ENCODE measurements at regions of chr20 and their contacts with region 1.

Region 1: GRCh38 chr20:20568604-20569205 is 143.7 kb downstream of the RALGAPA2 start:
- DNase-seq: no peak
- H3K4me3 Mint-ChIP-seq: no peak overlapping the region
- H3K27ac Mint-ChIP-seq: no peak overlapping the region
- H3K4me1 Mint-ChIP-seq: peaks cover 5% of the 10 kb centered on the region
- H3K27me3 Mint-ChIP-seq: no peaks in the 10 kb centered on the region

Region 2: DNA sequence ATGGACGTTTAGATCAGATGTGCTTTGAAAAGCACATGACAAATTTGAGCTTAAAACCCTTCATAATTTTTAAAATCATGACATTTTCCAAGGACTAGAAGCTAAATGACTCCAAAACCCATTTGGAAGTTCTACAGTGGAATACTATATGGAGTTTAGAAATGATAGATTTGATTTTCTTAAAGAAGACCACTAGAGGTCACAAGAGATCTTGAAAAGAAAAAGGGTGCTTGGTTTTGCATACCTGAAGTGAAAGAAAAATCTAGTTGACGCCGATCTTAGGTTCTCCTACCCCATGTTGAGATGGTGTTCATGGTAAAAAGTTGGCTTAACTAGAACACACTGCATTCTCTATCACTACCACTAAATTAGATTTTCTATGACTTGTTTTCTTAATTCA is 484.9 kb before region 1 on chr20:
- intact Hi-C with region 1: loop called (anchors 1 kb)
- DNase-seq: no peak
- H3K4me3 Mint-ChIP-seq: peak overlapping the region; percentile 54
- H3K27ac Mint-ChIP-seq: no peak overlapping the region
- H3K4me1 Mint-ChIP-seq: no peaks in the 10 kb centered on the region
- H3K27me3 Mint-ChIP-seq: peaks cover 14% of the 10 kb centered on the region

Region 3: DNA sequence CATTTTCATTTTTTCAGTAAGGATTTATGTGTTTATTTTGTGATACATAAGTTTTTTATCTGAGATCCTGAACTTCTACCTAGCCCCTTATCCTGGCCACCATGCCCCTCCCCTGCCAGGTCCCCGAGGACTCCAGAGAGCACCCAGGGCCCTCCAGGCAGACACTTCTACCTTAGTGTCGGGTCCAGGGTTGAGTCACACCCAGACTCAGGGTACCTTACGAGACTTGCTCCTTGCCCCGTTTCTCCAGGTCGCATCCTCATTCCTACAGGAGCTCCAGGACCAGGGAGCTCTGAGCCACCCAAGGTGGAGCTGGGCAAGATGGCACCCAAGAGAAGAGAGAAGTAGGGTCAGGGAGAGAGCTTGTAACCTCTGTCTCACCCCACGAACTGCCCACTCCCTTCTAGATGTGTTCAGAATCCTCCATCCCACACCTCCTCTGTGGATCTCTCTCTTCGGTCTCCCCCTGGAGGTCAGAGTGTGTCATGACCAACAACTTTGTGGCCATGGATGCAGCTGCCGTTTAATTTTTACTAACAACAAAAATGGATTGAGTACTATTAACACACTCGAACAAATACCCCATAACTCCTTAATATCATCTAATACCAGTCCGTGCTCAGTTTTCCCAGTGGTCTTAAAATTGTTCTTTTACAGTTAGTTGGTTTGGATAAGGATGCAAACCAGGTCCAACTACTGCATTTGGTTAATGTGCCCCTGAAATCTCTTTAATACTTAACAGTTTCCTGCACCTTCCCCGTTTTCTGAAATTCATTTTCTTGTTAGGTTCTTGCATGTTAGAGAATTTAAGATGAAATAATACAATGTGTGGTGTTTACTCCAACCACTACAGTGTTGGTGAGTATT is 331.4 kb before region 1 on chr20:
- intact Hi-C with region 1: loop called (anchors 5 kb)
- DNase-seq: no peak
- H3K4me3 Mint-ChIP-seq: no peak overlapping the region
- H3K27ac Mint-ChIP-seq: no peak overlapping the region
- H3K4me1 Mint-ChIP-seq: peaks cover 5% of the 10 kb centered on the region
- H3K27me3 Mint-ChIP-seq: peaks cover 13% of the 10 kb centered on the region

Region 4: GRCh38 chr20:20369250-20370093 is 199.2 kb before region 1 on chr20:
- intact Hi-C with region 1: loop called (anchors 1 kb)
- DNase-seq: no peak
- H3K4me3 Mint-ChIP-seq: peak overlapping the region; percentile 88
- H3K27ac Mint-ChIP-seq: peak overlapping the region; percentile 89
- H3K4me1 Mint-ChIP-seq: peaks cover 28% of the 10 kb centered on the region
- H3K27me3 Mint-ChIP-seq: peaks cover 60% of the 10 kb centered on the region

Region 5: GRCh38 chr20:20452254-20452676 is 116.4 kb before region 1 on chr20:
- intact Hi-C with region 1: loop called (anchors 5 kb)
- DNase-seq: peak; percentile 43
- H3K4me3 Mint-ChIP-seq: peak overlapping the region; percentile 89
- H3K27ac Mint-ChIP-seq: peak overlapping the region; percentile 91
- H3K4me1 Mint-ChIP-seq: peaks cover 54% of the 10 kb centered on the region
- H3K27me3 Mint-ChIP-seq: no peaks in the 10 kb centered on the region

Region 6: DNA sequence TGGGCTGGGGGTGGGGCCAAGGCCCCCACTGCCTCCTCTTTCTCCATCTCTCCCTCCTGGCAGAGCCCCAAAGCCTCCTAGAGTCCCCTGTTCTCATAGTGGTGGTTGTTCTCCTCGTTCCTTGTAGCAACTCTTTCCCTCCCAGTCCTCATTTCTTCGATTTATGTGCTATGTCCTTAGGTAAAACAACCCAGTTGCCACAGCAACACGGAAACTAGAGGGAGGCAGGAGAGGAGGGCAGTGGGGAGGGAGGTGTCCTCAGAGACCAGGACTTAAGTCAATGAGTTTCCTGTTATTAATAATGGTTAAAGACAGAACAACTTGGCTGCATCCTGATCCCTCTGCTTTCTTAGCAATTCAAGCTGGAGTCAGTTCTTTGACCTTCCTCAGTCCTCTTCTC is 39.8 kb before region 1 on chr20:
- intact Hi-C with region 1: no loop called
- DNase-seq: no peak
- H3K4me3 Mint-ChIP-seq: no peak overlapping the region
- H3K27ac Mint-ChIP-seq: no peak overlapping the region
- H3K4me1 Mint-ChIP-seq: no peaks in the 10 kb centered on the region
- H3K27me3 Mint-ChIP-seq: no peaks in the 10 kb centered on the region

Region 7: GRCh38 chr20:20658871-20659431 is 90.2 kb after region 1 on chr20:
- intact Hi-C with region 1: no loop called
- DNase-seq: no peak
- H3K4me3 Mint-ChIP-seq: no peak overlapping the region
- H3K27ac Mint-ChIP-seq: no peak overlapping the region
- H3K4me1 Mint-ChIP-seq: no peaks in the 10 kb centered on the region
- H3K27me3 Mint-ChIP-seq: no peaks in the 10 kb centered on the region

Region 8: DNA sequence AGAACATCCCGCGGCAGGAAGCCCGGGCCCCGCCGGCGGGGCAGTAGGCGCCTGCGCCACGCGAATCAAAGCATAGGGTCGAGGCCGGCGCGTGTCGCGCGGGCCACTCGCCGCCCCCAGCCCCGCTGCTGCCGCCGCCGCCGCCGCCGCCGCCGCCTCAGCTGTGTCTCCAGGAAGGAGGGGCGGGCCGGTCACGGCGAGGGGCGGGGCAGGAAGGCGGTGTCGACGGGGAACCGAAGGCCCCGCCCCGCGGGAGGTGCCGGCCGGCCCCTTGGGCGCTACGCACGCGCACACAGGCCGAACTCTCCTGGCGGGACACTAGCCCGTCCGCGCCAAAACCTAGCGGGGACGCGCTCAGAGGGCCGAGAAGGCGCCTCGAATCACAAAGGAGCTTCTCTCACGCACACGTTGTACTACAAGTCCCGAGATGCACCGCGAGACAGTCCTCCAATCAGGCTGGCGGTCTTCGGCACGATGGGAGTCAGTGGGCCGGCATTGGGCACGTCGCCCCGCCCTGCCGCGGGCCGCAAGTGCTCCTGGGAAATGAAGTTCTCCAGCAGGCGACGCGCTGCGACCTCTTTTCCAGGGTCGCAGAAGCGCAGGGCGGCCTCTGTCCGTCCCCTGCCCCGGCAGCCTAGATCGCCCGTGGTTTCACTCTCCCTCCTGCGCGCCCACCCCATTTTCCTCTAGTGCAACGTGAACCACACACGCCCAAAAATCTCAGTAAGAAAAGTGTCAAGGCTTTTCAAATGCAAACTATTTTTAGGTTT is 144.0 kb after region 1 on chr20 and contains the start of gene RALGAPA2:
- intact Hi-C with region 1: no loop called
- DNase-seq: peak; percentile 91
- H3K4me3 Mint-ChIP-seq: peak within 1 kb of the TSS; percentile 95
- H3K27ac Mint-ChIP-seq: peak within 1 kb of the TSS; percentile 89
- H3K4me1 Mint-ChIP-seq: peaks cover 33% of the 10 kb centered on the region
- H3K27me3 Mint-ChIP-seq: no peaks in the 10 kb centered on the region
- total RNA-seq, gene RALGAPA2: 18.0 and 19.6 TPM in 2 replicates